CD8-positive, alpha-beta T cell (primary cell): ENCODE measurements at regions of chr3 and their contacts with region 1.

Region 1: DNA sequence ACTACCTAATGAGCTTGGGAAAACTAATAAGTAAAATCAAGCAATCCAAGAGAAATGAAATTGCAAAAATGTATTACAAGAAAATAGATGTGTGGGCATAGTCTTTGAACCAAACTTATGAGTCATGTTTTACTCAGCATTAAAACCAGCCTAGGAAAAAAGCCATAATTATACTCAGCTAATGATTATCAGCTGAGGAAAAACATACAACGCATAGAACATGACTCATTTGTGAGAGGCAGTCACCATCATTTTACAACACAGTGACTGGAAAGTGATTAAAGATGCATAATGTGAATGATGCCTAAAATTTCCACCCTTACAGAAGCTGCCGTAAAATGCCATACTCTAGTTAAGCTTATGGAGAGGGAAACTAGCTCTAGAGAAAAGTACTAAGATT is 238.0 kb upstream of the EOMES start:
- DNase-seq: no peak
- ATAC-seq: no peak
- H3K4me3 ChIP-seq: no peak overlapping the region
- H3K4me3 Mint-ChIP-seq: no peak overlapping the region
- H3K27ac ChIP-seq: no peak overlapping the region
- H3K27ac Mint-ChIP-seq: no peak overlapping the region
- H3K4me1 ChIP-seq: no peaks in the 10 kb centered on the region
- H3K4me1 Mint-ChIP-seq: peaks cover 3% of the 10 kb centered on the region
- H3K27me3 ChIP-seq: no peaks in the 10 kb centered on the region
- H3K27me3 Mint-ChIP-seq: no peaks in the 10 kb centered on the region
- CTCF ChIP-seq: no peak

Region 2: GRCh38 chr3:27758083-27758482 is 202.1 kb before region 1 on chr3:
- CTCF ChIA-PET with region 1: no interaction called
- POLR2A ChIA-PET with region 1: no interaction called
- intact Hi-C with region 1: no loop called
- DNase-seq: no peak
- ATAC-seq: no peak
- H3K4me3 ChIP-seq: no peak overlapping the region
- H3K4me3 Mint-ChIP-seq: no peak overlapping the region
- H3K27ac ChIP-seq: no peak overlapping the region
- H3K27ac Mint-ChIP-seq: no peak overlapping the region
- H3K4me1 ChIP-seq: no peaks in the 10 kb centered on the region
- H3K4me1 Mint-ChIP-seq: peaks cover under 1% of the 10 kb centered on the region
- H3K27me3 ChIP-seq: no peaks in the 10 kb centered on the region
- H3K27me3 Mint-ChIP-seq: no peaks in the 10 kb centered on the region
- CTCF ChIP-seq: no peak

Region 3: DNA sequence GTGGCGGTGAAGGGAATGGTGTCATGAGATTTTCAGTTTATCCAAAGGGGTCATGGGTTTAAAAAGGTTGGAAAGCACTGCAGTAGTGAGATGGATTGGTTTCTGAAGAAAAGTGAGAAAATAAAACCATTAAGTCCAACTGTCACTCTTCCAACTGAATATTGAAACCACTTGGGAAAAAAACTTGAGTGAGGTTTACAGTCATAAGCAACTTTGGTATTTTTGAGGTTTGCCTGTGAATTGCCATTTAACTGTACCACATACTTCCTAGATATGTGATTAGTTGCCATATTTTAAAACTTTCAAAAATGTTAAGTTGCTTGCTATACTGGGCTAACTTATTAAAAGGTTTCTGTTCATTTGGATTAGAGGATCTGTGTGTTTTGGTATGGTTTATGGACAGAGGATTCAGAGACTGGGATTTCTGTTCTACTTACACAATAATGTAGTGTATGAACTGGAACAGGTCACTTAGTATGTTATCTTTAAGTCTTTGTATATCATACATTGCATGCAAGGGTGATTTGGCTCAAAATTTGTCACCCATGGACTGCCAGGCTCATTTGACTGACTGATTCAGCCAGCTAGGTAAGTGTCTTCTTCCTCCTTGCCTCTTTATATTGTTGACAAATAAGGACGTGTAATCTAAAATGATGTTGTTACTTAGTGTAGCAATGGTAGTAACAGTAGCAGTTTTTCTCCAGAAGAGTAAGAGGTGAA is 36.6 kb before region 1 on chr3:
- CTCF ChIA-PET with region 1: no interaction called
- POLR2A ChIA-PET with region 1: no interaction called
- intact Hi-C with region 1: loop called in 1 of 2 experiments (anchors 5 kb)
- DNase-seq: peak in 1 of 9 experiments; percentile 24
- ATAC-seq: no peak
- H3K4me3 ChIP-seq: no peak overlapping the region
- H3K4me3 Mint-ChIP-seq: no peak overlapping the region
- H3K27ac ChIP-seq: no peak overlapping the region
- H3K27ac Mint-ChIP-seq: no peak overlapping the region
- H3K4me1 ChIP-seq: no peaks in the 10 kb centered on the region
- H3K4me1 Mint-ChIP-seq: peaks cover 19% of the 10 kb centered on the region
- H3K27me3 ChIP-seq: no peaks in the 10 kb centered on the region
- H3K27me3 Mint-ChIP-seq: no peaks in the 10 kb centered on the region
- CTCF ChIP-seq: no peak